HCT116 (cell line): ENCODE measurements at regions of chr2 and their contacts with region 1.

Region 1: GRCh38 chr2:142980561-142981378 is 103.3 kb downstream of the KYNU start:
- DNase-seq: peak; percentile 16
- ATAC-seq: peak; percentile 47; the same call in 1 of the 2 replicates
- H3K4me3 ChIP-seq: no peak overlapping the region
- H3K27ac ChIP-seq: no peak overlapping the region
- H3K4me1 ChIP-seq: no peaks in the 10 kb centered on the region
- H3K27me3 ChIP-seq: no peaks in the 10 kb centered on the region
- CTCF ChIP-seq: peak; percentile 39 to 57 (median 43); a peak in 5 of 6 replicates
- POLR2A ChIP-seq: no peak
- RAD21 ChIP-seq: peak; percentile 59

Region 2: GRCh38 chr2:142165790-142166189 is 815.0 kb before region 1 on chr2:
- CTCF ChIA-PET with region 1: interaction called, 4 read pairs
- POLR2A ChIA-PET with region 1: no interaction called
- RAD21 ChIA-PET with region 1: no interaction called
- intact Hi-C with region 1: loop called (anchors 5 kb)
- DNase-seq: peak; percentile 47
- ATAC-seq: peak; percentile 99
- H3K4me3 ChIP-seq: no peak overlapping the region
- H3K27ac ChIP-seq: no peak overlapping the region
- H3K4me1 ChIP-seq: peaks cover 0 to 3% of the 10 kb centered on the region in 2 experiments; a peak in 1 of 4 replicates
- H3K27me3 ChIP-seq: no peaks in the 10 kb centered on the region
- CTCF ChIP-seq: peak; percentile 54 to 62 (median 59); a peak in 5 of 6 replicates
- POLR2A ChIP-seq: no peak
- RAD21 ChIP-seq: peak; percentile 75

Region 3: DNA sequence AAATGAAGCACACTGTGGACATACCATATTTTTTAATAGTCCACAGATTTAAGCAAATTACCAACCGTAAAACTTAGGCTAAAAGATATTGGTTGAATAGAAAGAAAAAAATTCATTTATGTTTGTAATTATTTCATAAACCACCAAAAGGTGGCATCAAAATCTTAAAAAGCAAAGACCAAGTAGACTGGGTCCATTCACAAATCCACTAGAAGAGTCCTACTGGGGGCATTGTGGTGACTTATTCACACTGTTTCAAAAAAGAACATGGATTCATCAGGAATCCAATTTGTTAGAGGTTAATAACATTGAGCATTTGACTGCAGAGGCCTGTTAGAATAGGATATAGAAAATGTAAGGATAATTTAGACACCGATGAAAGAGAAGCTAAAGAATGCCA is 298.2 kb before region 1 on chr2:
- CTCF ChIA-PET with region 1: interaction called, 6 read pairs
- POLR2A ChIA-PET with region 1: no interaction called
- RAD21 ChIA-PET with region 1: no interaction called
- intact Hi-C with region 1: loop called (anchors 2 kb)
- DNase-seq: peak; percentile 13
- ATAC-seq: no peak
- H3K4me3 ChIP-seq: no peak overlapping the region
- H3K27ac ChIP-seq: no peak overlapping the region
- H3K4me1 ChIP-seq: no peaks in the 10 kb centered on the region
- H3K27me3 ChIP-seq: no peaks in the 10 kb centered on the region
- CTCF ChIP-seq: peak in 1 of 3 experiments; percentile 36; a peak in 1 of 6 replicates
- POLR2A ChIP-seq: no peak
- RAD21 ChIP-seq: peak; percentile 53

Region 4: GRCh38 chr2:143241403-143242088 is 260.8 kb after region 1 on chr2:
- CTCF ChIA-PET with region 1: no interaction called
- POLR2A ChIA-PET with region 1: no interaction called
- RAD21 ChIA-PET with region 1: no interaction called
- intact Hi-C with region 1: no loop called
- DNase-seq: no peak
- ATAC-seq: no peak
- H3K4me3 ChIP-seq: no peak overlapping the region
- H3K27ac ChIP-seq: no peak overlapping the region
- H3K4me1 ChIP-seq: no peaks in the 10 kb centered on the region
- H3K27me3 ChIP-seq: peaks cover 20% of the 10 kb centered on the region
- CTCF ChIP-seq: no peak
- POLR2A ChIP-seq: no peak
- RAD21 ChIP-seq: no peak